Activated CD8-positive, alpha-beta T cell treated with anti-CD3 and anti-CD28 coated beads, Interleukin-2, amount 10 ng/mL, durations not matched to agents 7 days and 5 days (primary cell): ENCODE measurements at regions of chr19 and their contacts with region 1.

Region 1: DNA sequence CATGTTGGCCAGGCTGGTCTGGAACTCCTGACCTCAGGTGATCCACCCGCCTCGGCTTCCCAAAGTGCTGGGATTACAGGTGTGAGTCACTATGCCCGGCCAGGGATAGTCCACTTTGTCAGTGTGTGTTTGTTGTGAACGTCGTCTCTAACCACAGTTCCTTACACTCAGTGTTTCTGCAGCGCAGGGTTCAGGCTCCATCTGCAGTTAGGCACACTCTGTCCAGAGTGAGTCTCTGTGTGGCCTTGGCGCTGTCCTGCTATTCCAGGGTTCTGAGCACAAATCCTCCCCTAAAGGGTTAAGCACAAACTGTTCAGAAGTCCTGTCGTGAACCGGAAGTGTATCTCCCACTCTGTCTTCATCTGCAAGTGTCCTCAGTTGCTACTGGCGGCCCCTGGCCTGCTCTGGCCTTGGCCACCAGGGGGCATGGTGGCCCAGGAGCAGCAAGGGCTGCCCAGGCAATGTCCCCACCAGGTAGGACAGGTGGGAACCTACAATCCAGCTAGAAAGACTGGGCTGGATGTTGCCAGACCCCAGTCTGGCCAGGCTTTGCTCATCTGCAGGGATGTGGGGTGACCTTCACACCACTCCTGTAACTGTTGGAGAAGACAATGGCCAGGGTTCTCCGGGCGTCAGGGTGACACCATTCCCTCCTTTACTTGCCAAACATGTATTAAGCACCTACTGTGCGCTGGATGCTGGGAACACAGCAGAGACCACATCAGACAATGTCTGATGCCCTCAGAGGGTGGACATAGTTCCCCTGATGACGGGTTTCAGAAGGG is 38.7 kb upstream of the GATAD2A start:
- DNase-seq: peak; percentile 81
- ATAC-seq: peak; percentile 88
- H3K4me3 Mint-ChIP-seq: peak overlapping the region; percentile 34
- H3K27ac Mint-ChIP-seq: peak overlapping the region; percentile 78
- H3K4me1 Mint-ChIP-seq: peaks cover 29% of the 10 kb centered on the region
- H3K27me3 Mint-ChIP-seq: no peaks in the 10 kb centered on the region

Region 2: GRCh38 chr19:19385108-19385899 is 18.5 kb after region 1 on chr19:
- CTCF ChIA-PET with region 1: interaction called, 12 read pairs
- POLR2A ChIA-PET with region 1: interaction called, 3 read pairs
- DNase-seq: peak; percentile 100
- ATAC-seq: peak; percentile 96
- H3K4me3 Mint-ChIP-seq: peak overlapping the region; percentile 80
- H3K27ac Mint-ChIP-seq: peak overlapping the region; percentile 92
- H3K4me1 Mint-ChIP-seq: peaks cover 45% of the 10 kb centered on the region
- H3K27me3 Mint-ChIP-seq: no peaks in the 10 kb centered on the region